CD8-positive, alpha-beta T cell (primary cell): ENCODE measurements at regions of chr20 and their contacts with region 1.

Region 1: GRCh38 chr20:21309678-21310467 is 6.7 kb downstream of the XRN2 start:
- DNase-seq: no peak
- ATAC-seq: no peak
- H3K4me3 ChIP-seq: no peak overlapping the region
- H3K4me3 Mint-ChIP-seq: peak overlapping the region; percentile 6
- H3K27ac ChIP-seq: no peak overlapping the region
- H3K27ac Mint-ChIP-seq: peak overlapping the region; percentile 8
- H3K4me1 ChIP-seq: peaks cover 54% of the 10 kb centered on the region
- H3K4me1 Mint-ChIP-seq: peaks cover 67% of the 10 kb centered on the region
- H3K27me3 ChIP-seq: no peaks in the 10 kb centered on the region
- H3K27me3 Mint-ChIP-seq: no peaks in the 10 kb centered on the region
- CTCF ChIP-seq: no peak

Region 2: GRCh38 chr20:20903773-20904500 is 405.9 kb before region 1 on chr20:
- CTCF ChIA-PET with region 1: no interaction called
- POLR2A ChIA-PET with region 1: no interaction called
- intact Hi-C with region 1: no loop called
- DNase-seq: no peak
- ATAC-seq: no peak
- H3K4me3 ChIP-seq: no peak overlapping the region
- H3K4me3 Mint-ChIP-seq: no peak overlapping the region
- H3K27ac ChIP-seq: no peak overlapping the region
- H3K27ac Mint-ChIP-seq: no peak overlapping the region
- H3K4me1 ChIP-seq: no peaks in the 10 kb centered on the region
- H3K4me1 Mint-ChIP-seq: no peaks in the 10 kb centered on the region
- H3K27me3 ChIP-seq: no peaks in the 10 kb centered on the region
- H3K27me3 Mint-ChIP-seq: peaks cover 12% of the 10 kb centered on the region
- CTCF ChIP-seq: no peak

Region 3: GRCh38 chr20:21096321-21097043 is 213.4 kb before region 1 on chr20:
- CTCF ChIA-PET with region 1: no interaction called
- POLR2A ChIA-PET with region 1: no interaction called
- intact Hi-C with region 1: no loop called
- DNase-seq: peak in 2 of 9 experiments; percentile 40 to 53
- ATAC-seq: peak; percentile 16
- H3K4me3 ChIP-seq: no peak overlapping the region
- H3K4me3 Mint-ChIP-seq: no peak overlapping the region
- H3K27ac ChIP-seq: no peak overlapping the region
- H3K27ac Mint-ChIP-seq: no peak overlapping the region
- H3K4me1 ChIP-seq: peaks cover 20% of the 10 kb centered on the region
- H3K4me1 Mint-ChIP-seq: peaks cover 20% of the 10 kb centered on the region
- H3K27me3 ChIP-seq: peaks cover 17 to 23% of the 10 kb centered on the region in 2 experiments
- H3K27me3 Mint-ChIP-seq: peaks cover 73% of the 10 kb centered on the region
- CTCF ChIP-seq: no peak

Region 4: GRCh38 chr20:21323640-21324039 is 13.8 kb after region 1 on chr20:
- CTCF ChIA-PET with region 1: interaction called, 3 read pairs
- POLR2A ChIA-PET with region 1: interaction called, 5 read pairs
- intact Hi-C with region 1: loop called in 1 of 2 experiments (anchors 2 kb)
- DNase-seq: no peak
- ATAC-seq: no peak
- H3K4me3 ChIP-seq: no peak overlapping the region
- H3K4me3 Mint-ChIP-seq: no peak overlapping the region
- H3K27ac ChIP-seq: no peak overlapping the region
- H3K27ac Mint-ChIP-seq: peak overlapping the region; percentile 72
- H3K4me1 ChIP-seq: peaks cover 41% of the 10 kb centered on the region
- H3K4me1 Mint-ChIP-seq: peaks cover 71% of the 10 kb centered on the region
- H3K27me3 ChIP-seq: no peaks in the 10 kb centered on the region
- H3K27me3 Mint-ChIP-seq: no peaks in the 10 kb centered on the region
- CTCF ChIP-seq: no peak